ENCODE measurements at regions of chr15 and their contacts with region 1.

Region 1: GRCh38 chr15:37856109-37856508 is 78.3 kb upstream of the TMCO5A start:
- DNase-seq: no peak
- ATAC-seq: no peak
- H3K4me3 Mint-ChIP-seq: no peak overlapping the region
- H3K27ac Mint-ChIP-seq: no peak overlapping the region
- H3K4me1 Mint-ChIP-seq: no peaks in the 10 kb centered on the region
- H3K27me3 Mint-ChIP-seq: no peaks in the 10 kb centered on the region
- CTCF ChIP-seq: no peak

Region 2: GRCh38 chr15:37698679-37699078 is 157.4 kb before region 1 on chr15:
- CTCF ChIA-PET with region 1: no interaction called
- POLR2A ChIA-PET with region 1: no interaction called
- intact Hi-C with region 1: no loop called
- DNase-seq: no peak
- ATAC-seq: no peak
- H3K4me3 Mint-ChIP-seq: no peak overlapping the region
- H3K27ac Mint-ChIP-seq: no peak overlapping the region
- H3K4me1 Mint-ChIP-seq: no peaks in the 10 kb centered on the region
- H3K27me3 Mint-ChIP-seq: no peaks in the 10 kb centered on the region
- CTCF ChIP-seq: no peak

Region 3: DNA sequence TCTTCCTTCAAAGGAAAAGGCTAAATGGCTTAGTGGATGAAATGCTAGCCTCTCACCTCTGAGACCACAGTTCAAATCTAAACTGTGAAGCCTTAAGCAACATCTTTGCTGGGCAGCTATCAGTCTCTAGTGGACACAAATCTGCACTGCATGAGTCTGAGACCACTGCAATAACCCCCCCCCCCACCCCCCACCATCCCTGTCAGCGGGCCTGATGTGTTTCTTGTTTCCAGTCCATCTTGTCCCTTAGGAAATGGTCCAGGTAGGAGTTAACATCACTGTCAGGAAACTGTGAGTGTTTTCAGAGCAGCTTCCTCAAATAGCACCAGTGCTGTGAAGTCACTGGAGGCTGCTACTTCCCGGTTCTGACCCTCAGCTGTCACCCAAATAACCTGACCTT is 62.3 kb before region 1 on chr15:
- CTCF ChIA-PET with region 1: no interaction called
- POLR2A ChIA-PET with region 1: no interaction called
- intact Hi-C with region 1: loop called (anchors 10 kb)
- DNase-seq: no peak
- ATAC-seq: no peak
- H3K4me3 Mint-ChIP-seq: no peak overlapping the region
- H3K27ac Mint-ChIP-seq: no peak overlapping the region
- H3K4me1 Mint-ChIP-seq: no peaks in the 10 kb centered on the region
- H3K27me3 Mint-ChIP-seq: peaks cover 4% of the 10 kb centered on the region
- CTCF ChIP-seq: no peak

Region 4: GRCh38 chr15:37837276-37837675 is 18.8 kb before region 1 on chr15:
- CTCF ChIA-PET with region 1: no interaction called
- POLR2A ChIA-PET with region 1: no interaction called
- intact Hi-C with region 1: no loop called
- DNase-seq: no peak
- ATAC-seq: no peak
- H3K4me3 Mint-ChIP-seq: no peak overlapping the region
- H3K27ac Mint-ChIP-seq: no peak overlapping the region
- H3K4me1 Mint-ChIP-seq: no peaks in the 10 kb centered on the region
- H3K27me3 Mint-ChIP-seq: no peaks in the 10 kb centered on the region
- CTCF ChIP-seq: no peak

Region 5: GRCh38 chr15:37940876-37941275 is 84.8 kb after region 1 on chr15:
- CTCF ChIA-PET with region 1: no interaction called
- POLR2A ChIA-PET with region 1: no interaction called
- intact Hi-C with region 1: no loop called
- DNase-seq: no peak
- ATAC-seq: no peak
- H3K4me3 Mint-ChIP-seq: no peak overlapping the region
- H3K27ac Mint-ChIP-seq: no peak overlapping the region
- H3K4me1 Mint-ChIP-seq: no peaks in the 10 kb centered on the region
- H3K27me3 Mint-ChIP-seq: peaks cover 2% of the 10 kb centered on the region
- CTCF ChIP-seq: no peak

Region 6: DNA sequence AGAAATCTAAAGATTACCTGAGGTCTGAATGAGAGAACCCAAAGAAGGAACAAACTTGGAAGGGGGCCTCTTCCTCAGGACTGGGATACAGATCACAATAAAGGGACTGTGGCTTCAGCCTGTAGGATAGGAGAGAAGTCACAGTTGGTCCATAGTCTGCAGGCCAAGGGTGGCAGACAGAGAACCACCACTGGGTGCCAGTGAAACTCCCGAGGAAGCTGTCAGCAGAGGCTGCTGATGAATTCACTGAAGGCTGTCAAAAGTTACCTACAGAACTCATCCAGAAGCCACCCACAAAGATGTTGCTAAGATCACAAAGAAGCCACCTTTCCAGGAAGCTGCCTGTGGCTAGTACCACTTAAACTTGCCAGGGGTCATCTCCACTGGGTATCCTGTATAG is 156.8 kb after region 1 on chr15:
- CTCF ChIA-PET with region 1: no interaction called
- POLR2A ChIA-PET with region 1: no interaction called
- intact Hi-C with region 1: no loop called
- DNase-seq: no peak
- ATAC-seq: no peak
- H3K4me3 Mint-ChIP-seq: no peak overlapping the region
- H3K27ac Mint-ChIP-seq: no peak overlapping the region
- H3K4me1 Mint-ChIP-seq: no peaks in the 10 kb centered on the region
- H3K27me3 Mint-ChIP-seq: peaks cover 6% of the 10 kb centered on the region
- CTCF ChIP-seq: no peak

Measured in activated CD8-positive, alpha-beta T cell treated with anti-CD3 and anti-CD28 coated beads for 36 hours (primary cell).